ENCODE measurements at regions of chr14 and their contacts with region 1.

Region 1: DNA sequence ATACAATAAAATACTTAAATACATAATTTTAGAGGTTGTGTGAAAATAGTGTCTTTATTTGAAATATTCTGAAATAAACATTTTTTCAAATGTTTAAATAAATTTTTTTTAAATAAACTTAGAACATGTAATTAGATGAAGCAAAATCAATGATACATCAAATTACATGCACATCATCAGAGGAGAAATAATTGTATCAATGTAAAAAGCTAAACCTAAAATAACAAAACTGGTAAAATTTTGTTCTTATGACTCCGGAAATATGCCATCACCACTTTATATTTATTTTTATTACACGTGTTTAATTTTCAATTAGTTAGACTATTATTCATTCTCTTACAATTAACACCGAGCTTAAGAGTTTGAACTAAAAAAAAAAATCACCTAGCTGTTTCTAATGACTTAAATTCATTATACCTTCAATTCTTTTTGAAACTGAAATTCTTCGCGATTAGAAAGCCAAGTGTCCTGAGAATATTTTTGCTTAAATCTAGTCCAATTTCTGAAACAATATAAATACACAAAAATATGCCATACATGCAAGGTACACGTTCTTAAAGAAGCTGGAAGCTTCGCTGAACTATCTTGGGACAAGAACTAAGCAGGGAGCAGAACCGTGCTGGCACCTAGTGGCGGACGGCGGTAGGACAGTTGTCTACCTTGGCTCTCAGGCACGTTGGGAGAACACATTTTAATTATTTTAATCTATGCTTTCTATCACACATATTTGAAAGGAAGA is 230.5 kb downstream of the SLC25A21 start:
- DNase-seq: peak; percentile 82
- H3K4me3 ChIP-seq: no peak overlapping the region
- H3K27ac ChIP-seq: no peak overlapping the region
- H3K4me1 ChIP-seq: peaks cover 31% of the 10 kb centered on the region
- H3K27me3 ChIP-seq: no peaks in the 10 kb centered on the region
- CTCF ChIP-seq: peak; percentile 97

Region 2: GRCh38 chr14:36755725-36756124 is 186.2 kb before region 1 on chr14:
- CTCF ChIA-PET with region 1: interaction called, 9 read pairs
- POLR2A ChIA-PET with region 1: no interaction called
- intact Hi-C with region 1: loop called (anchors 1 kb)
- DNase-seq: peak; percentile 75
- H3K4me3 ChIP-seq: no peak overlapping the region
- H3K27ac ChIP-seq: peak overlapping the region; percentile 84
- H3K4me1 ChIP-seq: peaks cover 58% of the 10 kb centered on the region
- H3K27me3 ChIP-seq: no peaks in the 10 kb centered on the region
- CTCF ChIP-seq: peak; percentile 29; the same call in 1 of the 2 replicates

Region 3: DNA sequence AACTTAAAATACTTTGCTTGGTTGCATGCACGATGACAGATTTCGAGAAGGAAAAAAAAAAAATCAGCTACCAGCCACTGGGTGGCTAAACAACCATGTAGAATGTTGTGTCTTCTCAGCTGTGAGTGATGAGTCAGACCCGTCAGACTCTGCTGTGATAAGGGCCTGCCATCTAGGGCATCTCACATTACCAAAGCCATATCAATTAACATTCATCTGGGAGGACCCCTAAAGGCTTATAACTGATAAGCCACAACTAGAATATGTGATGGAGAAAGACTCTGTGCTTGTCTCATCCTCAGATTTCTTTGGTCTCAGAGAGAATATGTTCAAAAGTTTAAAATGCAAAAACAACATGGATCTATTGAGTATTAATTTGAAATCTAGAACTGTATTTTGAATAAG is 168.8 kb before region 1 on chr14:
- CTCF ChIA-PET with region 1: interaction called, 11 read pairs
- POLR2A ChIA-PET with region 1: no interaction called
- intact Hi-C with region 1: loop called (anchors 1 kb)
- DNase-seq: peak; percentile 80
- H3K4me3 ChIP-seq: no peak overlapping the region
- H3K27ac ChIP-seq: no peak overlapping the region
- H3K4me1 ChIP-seq: peaks cover 31% of the 10 kb centered on the region
- H3K27me3 ChIP-seq: no peaks in the 10 kb centered on the region
- CTCF ChIP-seq: peak; percentile 60

Region 4: DNA sequence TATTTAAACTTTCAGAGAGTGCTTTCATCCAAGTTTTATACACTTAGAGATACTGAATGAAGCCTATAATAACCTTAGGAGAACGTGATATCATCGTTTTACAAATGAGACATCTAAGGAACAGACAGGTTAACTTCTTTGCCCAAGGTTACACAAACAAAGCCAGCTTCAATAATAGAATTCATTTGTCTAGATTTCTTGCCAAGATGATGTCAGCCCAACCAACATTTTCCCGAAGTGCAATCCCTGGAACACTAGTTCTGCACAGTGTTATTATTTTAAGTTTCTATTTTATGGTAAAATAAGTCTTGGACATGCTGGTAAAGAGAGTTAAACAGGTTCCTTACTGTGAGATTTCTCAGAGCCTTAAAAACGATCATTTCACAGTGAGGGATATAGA is 55.9 kb after region 1 on chr14:
- CTCF ChIA-PET with region 1: no interaction called
- POLR2A ChIA-PET with region 1: no interaction called
- intact Hi-C with region 1: no loop called
- DNase-seq: no peak
- H3K4me3 ChIP-seq: no peak overlapping the region
- H3K27ac ChIP-seq: no peak overlapping the region
- H3K4me1 ChIP-seq: peaks cover 2% of the 10 kb centered on the region
- H3K27me3 ChIP-seq: no peaks in the 10 kb centered on the region
- CTCF ChIP-seq: no peak

Region 5: GRCh38 chr14:37270629-37271028 is 328.7 kb after region 1 on chr14:
- CTCF ChIA-PET with region 1: no interaction called
- POLR2A ChIA-PET with region 1: no interaction called
- intact Hi-C with region 1: no loop called
- DNase-seq: no peak
- H3K4me3 ChIP-seq: no peak overlapping the region
- H3K27ac ChIP-seq: no peak overlapping the region
- H3K4me1 ChIP-seq: no peaks in the 10 kb centered on the region
- H3K27me3 ChIP-seq: no peaks in the 10 kb centered on the region
- CTCF ChIP-seq: no peak